ENCODE measurements at regions of chr18 and their contacts with region 1.

Region 1: DNA sequence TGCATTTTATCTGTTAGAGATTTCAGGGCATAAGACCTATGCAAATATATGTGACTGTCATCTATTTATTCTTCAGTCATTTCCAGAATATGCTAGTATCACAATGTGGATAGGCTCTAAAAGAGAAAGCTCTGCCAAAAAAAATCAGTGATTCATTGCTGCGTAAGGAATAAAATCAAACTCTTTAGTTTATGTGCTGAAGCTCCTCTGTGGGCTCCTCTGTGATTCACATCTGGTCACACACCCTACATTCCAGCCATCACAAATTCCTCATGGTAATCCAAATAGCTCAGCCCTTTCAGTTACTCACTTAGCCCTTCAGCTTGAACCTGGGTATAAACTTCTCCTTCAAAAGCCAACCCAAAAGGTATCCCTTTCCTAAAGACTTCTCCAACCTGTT is 21.4 kb downstream of the DLGAP1 start:
- DNase-seq: no peak
- ATAC-seq: no peak
- H3K4me3 ChIP-seq: no peak overlapping the region
- H3K27ac ChIP-seq: no peak overlapping the region
- H3K4me1 ChIP-seq: no peaks in the 10 kb centered on the region
- H3K27me3 ChIP-seq: no peaks in the 10 kb centered on the region
- CTCF ChIP-seq: no peak

Region 2: GRCh38 chr18:4369705-4370104 is 64.0 kb before region 1 on chr18:
- intact Hi-C with region 1: loop called in 1 of 2 experiments (anchors 10 kb)
- DNase-seq: no peak
- ATAC-seq: no peak
- H3K4me3 ChIP-seq: no peak overlapping the region
- H3K27ac ChIP-seq: no peak overlapping the region
- H3K4me1 ChIP-seq: no peaks in the 10 kb centered on the region
- H3K27me3 ChIP-seq: no peaks in the 10 kb centered on the region
- CTCF ChIP-seq: no peak

Measured in psoas muscle (tissue), 8 donors.